Heart left ventricle (tissue), 16 donors: ENCODE measurements at regions of chr14 and their contacts with region 1.

Region 1: GRCh38 chr14:63993992-63994391 is 141.2 kb downstream of the SYNE2 start:
- DNase-seq: no peak
- ATAC-seq: no peak
- H3K4me3 ChIP-seq: no peak overlapping the region
- H3K27ac ChIP-seq: no peak overlapping the region
- H3K4me1 ChIP-seq: no peaks in the 10 kb centered on the region
- H3K27me3 ChIP-seq: no peaks in the 10 kb centered on the region
- CTCF ChIP-seq: peak in 6 of 12 donors; percentile 14 to 46 (median 34)
- POLR2A ChIP-seq: no peak

Region 2: DNA sequence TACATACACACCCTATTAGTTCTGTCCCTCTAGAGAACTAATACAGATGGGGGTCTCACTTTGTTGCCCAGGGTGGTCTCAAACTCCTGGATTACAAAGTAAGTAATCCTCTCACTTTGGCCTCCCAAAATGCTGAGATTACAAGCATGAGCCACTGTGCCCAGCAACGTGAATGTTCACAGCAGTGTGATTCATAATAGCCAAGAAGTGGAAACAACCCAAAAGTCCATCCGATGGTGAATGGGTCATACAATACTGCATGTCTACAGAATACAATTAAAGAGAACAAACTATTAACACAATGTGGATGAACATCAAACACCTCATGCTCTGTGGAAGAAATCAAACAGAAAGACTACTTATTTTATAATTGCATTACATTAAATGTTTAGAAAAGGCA is 198.5 kb before region 1 on chr14:
- intact Hi-C with region 1: loop called in 5 of 10 experiments (anchors 5 to 10 kb)
- DNase-seq: no peak
- ATAC-seq: no peak
- H3K4me3 ChIP-seq: no peak overlapping the region
- H3K27ac ChIP-seq: no peak overlapping the region
- H3K4me1 ChIP-seq: peaks cover 0 to 9% (median 0%) of the 10 kb centered on the region in 12 donors
- H3K27me3 ChIP-seq: no peaks in the 10 kb centered on the region
- CTCF ChIP-seq: no peak
- POLR2A ChIP-seq: no peak

Region 3: GRCh38 chr14:63800651-63801375 is 193.2 kb before region 1 on chr14:
- intact Hi-C with region 1: loop called in 5 of 10 experiments (anchors 5 to 10 kb)
- DNase-seq: no peak
- ATAC-seq: no peak
- H3K4me3 ChIP-seq: no peak overlapping the region
- H3K27ac ChIP-seq: no peak overlapping the region
- H3K4me1 ChIP-seq: peaks cover 0 to 9% (median 0%) of the 10 kb centered on the region in 12 donors
- H3K27me3 ChIP-seq: no peaks in the 10 kb centered on the region
- CTCF ChIP-seq: no peak
- POLR2A ChIP-seq: no peak

Region 4: GRCh38 chr14:63840981-63841380 is 153.0 kb before region 1 on chr14:
- intact Hi-C with region 1: loop called in 1 of 10 experiments (anchors 10 kb)
- DNase-seq: peak in 1 of 5 donors; percentile 42
- ATAC-seq: no peak
- H3K4me3 ChIP-seq: no peak overlapping the region
- H3K27ac ChIP-seq: no peak overlapping the region
- H3K4me1 ChIP-seq: no peaks in the 10 kb centered on the region
- H3K27me3 ChIP-seq: no peaks in the 10 kb centered on the region
- CTCF ChIP-seq: peak in 9 of 12 donors; percentile 5 to 40 (median 21)
- POLR2A ChIP-seq: no peak